GM12878 (cell line): ENCODE measurements at regions of chr4 and their contacts with region 1.

Region 1: GRCh38 chr4:159051245-159052071 is 51.4 kb upstream of the RAPGEF2 start:
- DNase-seq: peak; percentile 84
- ATAC-seq: peak; percentile 92
- H3K4me3 ChIP-seq: peak overlapping the region; percentile 58; the same call in 1 of the 2 replicates
- H3K27ac ChIP-seq: peak overlapping the region; percentile 68
- H3K4me1 ChIP-seq: peaks cover 27% of the 10 kb centered on the region
- H3K27me3 ChIP-seq: no peaks in the 10 kb centered on the region
- CTCF ChIP-seq: no peak
- EP300 ChIP-seq: peak; percentile 70 to 75; a peak in 2 of 4 replicates
- POLR2A ChIP-seq: no peak
- RAD21 ChIP-seq: no peak

Region 2: GRCh38 chr4:159027535-159027934 is 23.9 kb before region 1 on chr4:
- CTCF ChIA-PET with region 1: interaction called, 3 read pairs
- POLR2A ChIA-PET with region 1: no interaction called
- RAD21 ChIA-PET with region 1: interaction called, 4 read pairs
- SMC1A ChIA-PET with region 1: interaction called, 13 read pairs
- in situ Hi-C with region 1: no loop called
- intact Hi-C with region 1: no loop called
- DNase-seq: no peak
- ATAC-seq: peak; percentile 85
- H3K4me3 ChIP-seq: no peak overlapping the region
- H3K27ac ChIP-seq: no peak overlapping the region
- H3K4me1 ChIP-seq: peaks cover 7% of the 10 kb centered on the region; the same call in 1 of the 2 replicates
- H3K27me3 ChIP-seq: no peaks in the 10 kb centered on the region; a peak in 1 of 4 replicates
- CTCF ChIP-seq: no peak
- EP300 ChIP-seq: no peak
- POLR2A ChIP-seq: no peak
- RAD21 ChIP-seq: no peak

Region 3: GRCh38 chr4:159077702-159078495 is 26.4 kb after region 1 on chr4:
- CTCF ChIA-PET with region 1: interaction called, 4 read pairs
- POLR2A ChIA-PET with region 1: interaction called, 3 read pairs
- RAD21 ChIA-PET with region 1: interaction called, 17 read pairs
- SMC1A ChIA-PET with region 1: interaction called, 20 read pairs
- in situ Hi-C with region 1: no loop called
- intact Hi-C with region 1: loop called (anchors 1 kb)
- DNase-seq: peak; percentile 77
- ATAC-seq: peak; percentile 92
- H3K4me3 ChIP-seq: 0 out of 2 replicates have a peak overlapping the region, but pooled peaks have one; percentile 1
- H3K27ac ChIP-seq: peak overlapping the region; percentile 83
- H3K4me1 ChIP-seq: peaks cover 23% of the 10 kb centered on the region
- H3K27me3 ChIP-seq: no peaks in the 10 kb centered on the region
- CTCF ChIP-seq: no peak
- EP300 ChIP-seq: peak; percentile 92 to 95; a peak in 3 of 4 replicates
- POLR2A ChIP-seq: no peak
- RAD21 ChIP-seq: no peak

Region 4: DNA sequence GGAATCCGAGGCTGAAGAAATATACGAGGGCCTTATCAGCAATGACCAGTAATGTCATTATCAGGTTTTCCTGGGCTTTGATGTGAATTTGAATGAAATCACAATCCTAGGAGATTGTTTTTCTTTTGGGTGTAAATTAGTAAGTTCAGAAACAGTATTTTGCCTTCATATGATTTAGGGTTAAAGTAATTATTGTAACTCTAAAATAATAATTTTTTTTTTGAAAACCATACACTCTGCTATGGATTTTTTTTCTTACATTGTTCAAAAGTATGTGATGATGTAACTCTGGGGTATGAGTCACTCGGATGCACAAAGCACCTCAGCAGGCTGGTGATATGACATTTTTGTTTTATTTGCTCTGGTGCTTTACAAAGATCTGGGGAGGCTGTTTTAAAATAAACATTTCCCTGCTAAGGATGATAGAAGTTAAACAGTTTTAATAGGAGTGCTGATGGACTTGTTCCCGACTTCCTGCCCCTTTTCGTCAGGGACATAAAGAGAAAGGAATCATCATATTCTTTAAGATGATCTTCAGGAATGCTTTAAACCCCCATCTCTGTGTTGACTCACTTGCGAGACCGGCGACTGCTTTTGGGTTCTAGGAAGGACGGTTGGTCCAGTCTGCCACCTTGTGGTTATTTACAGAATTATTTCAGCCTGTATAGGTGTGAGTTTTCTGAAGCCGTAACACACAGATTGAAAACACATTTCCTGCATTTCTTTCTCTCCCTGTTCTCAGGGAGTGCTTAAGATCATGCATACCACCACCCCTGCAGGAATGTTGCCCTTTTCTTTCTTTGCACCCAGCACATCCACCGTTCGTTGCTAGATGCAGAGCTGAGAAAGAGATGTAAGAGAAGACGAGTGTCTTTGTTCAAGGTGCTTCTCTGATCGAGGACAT is 123.9 kb after region 1 on chr4:
- CTCF ChIA-PET with region 1: interaction called, 3 read pairs
- POLR2A ChIA-PET with region 1: no interaction called
- RAD21 ChIA-PET with region 1: interaction called, 6 read pairs
- SMC1A ChIA-PET with region 1: interaction called, 8 read pairs
- in situ Hi-C with region 1: no loop called
- intact Hi-C with region 1: loop called (anchors 2 kb)
- DNase-seq: peak; percentile 73
- ATAC-seq: peak; percentile 82
- H3K4me3 ChIP-seq: peak overlapping the region; percentile 60
- H3K27ac ChIP-seq: no peak overlapping the region; the same call in 1 of the 2 replicates
- H3K4me1 ChIP-seq: peaks cover 58% of the 10 kb centered on the region
- H3K27me3 ChIP-seq: no peaks in the 10 kb centered on the region
- CTCF ChIP-seq: peak; percentile 59 to 85 (median 75)
- EP300 ChIP-seq: no peak
- POLR2A ChIP-seq: no peak
- RAD21 ChIP-seq: peak; percentile 98